Activated CD8-positive, alpha-beta T cell treated with anti-CD3 and anti-CD28 coated beads for 36 hours (primary cell): ENCODE measurements at regions of chr2 and their contacts with region 1.

Region 1: DNA sequence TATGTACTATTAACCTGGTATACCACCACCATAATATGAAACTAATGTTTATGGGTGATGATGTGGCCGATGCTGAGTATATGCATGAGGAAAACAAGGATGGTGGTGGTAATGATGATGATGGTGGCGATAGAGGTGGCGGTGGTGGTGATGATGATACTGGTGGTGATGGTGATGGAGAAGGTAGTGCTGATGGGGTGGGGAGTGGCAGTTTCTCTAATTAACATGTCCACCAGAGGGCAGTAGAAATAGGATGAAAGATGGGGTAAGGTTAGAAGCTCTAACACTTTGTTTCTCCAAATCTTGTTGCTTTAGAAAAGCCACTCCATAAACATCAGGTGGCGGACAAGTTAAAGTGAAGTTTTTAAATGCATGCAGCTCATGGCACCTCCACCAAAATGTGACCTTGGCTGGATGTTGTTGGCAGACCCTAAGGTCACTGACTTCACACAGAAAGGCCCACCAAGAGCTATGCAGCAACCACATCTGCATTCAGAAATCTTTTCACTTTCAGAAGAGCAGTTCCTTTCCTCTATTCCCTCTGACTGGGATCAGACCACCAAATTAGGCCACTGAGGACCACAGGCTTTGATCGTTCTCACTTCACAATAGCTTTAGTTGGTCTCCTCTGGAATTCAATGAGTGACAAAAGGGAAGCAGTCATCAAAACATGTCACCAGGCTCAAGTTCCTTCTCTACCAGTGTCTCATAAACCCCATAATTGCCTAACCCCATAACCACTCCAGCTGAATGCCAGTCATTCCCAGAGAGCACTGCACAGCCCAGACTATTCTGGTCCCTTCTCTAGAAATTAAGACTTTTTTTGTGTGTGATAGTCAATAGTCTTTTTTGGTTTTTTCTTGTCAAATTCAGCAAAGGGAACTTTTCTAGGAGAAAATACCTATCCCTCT is 7.5 kb upstream of the BCL11A start:
- DNase-seq: peak; percentile 20
- ATAC-seq: peak; percentile 60
- H3K4me3 Mint-ChIP-seq: no peak overlapping the region
- H3K27ac Mint-ChIP-seq: no peak overlapping the region
- H3K4me1 Mint-ChIP-seq: peaks cover 12% of the 10 kb centered on the region
- H3K27me3 Mint-ChIP-seq: peaks cover 48% of the 10 kb centered on the region
- CTCF ChIP-seq: no peak

Region 2: GRCh38 chr2:60484133-60484645 is 76.8 kb before region 1 on chr2:
- CTCF ChIA-PET with region 1: no interaction called
- POLR2A ChIA-PET with region 1: no interaction called
- intact Hi-C with region 1: no loop called
- DNase-seq: no peak
- ATAC-seq: no peak
- H3K4me3 Mint-ChIP-seq: no peak overlapping the region
- H3K27ac Mint-ChIP-seq: no peak overlapping the region
- H3K4me1 Mint-ChIP-seq: no peaks in the 10 kb centered on the region
- H3K27me3 Mint-ChIP-seq: peaks cover 5% of the 10 kb centered on the region
- CTCF ChIP-seq: no peak

Region 3: GRCh38 chr2:60544954-60545560 is 15.9 kb before region 1 on chr2:
- CTCF ChIA-PET with region 1: interaction called, 12 read pairs
- POLR2A ChIA-PET with region 1: interaction called, 6 read pairs
- intact Hi-C with region 1: no loop called
- DNase-seq: no peak
- ATAC-seq: no peak
- H3K4me3 Mint-ChIP-seq: no peak overlapping the region
- H3K27ac Mint-ChIP-seq: no peak overlapping the region
- H3K4me1 Mint-ChIP-seq: peaks cover 7% of the 10 kb centered on the region
- H3K27me3 Mint-ChIP-seq: peaks cover 49% of the 10 kb centered on the region
- CTCF ChIP-seq: no peak

Region 4: DNA sequence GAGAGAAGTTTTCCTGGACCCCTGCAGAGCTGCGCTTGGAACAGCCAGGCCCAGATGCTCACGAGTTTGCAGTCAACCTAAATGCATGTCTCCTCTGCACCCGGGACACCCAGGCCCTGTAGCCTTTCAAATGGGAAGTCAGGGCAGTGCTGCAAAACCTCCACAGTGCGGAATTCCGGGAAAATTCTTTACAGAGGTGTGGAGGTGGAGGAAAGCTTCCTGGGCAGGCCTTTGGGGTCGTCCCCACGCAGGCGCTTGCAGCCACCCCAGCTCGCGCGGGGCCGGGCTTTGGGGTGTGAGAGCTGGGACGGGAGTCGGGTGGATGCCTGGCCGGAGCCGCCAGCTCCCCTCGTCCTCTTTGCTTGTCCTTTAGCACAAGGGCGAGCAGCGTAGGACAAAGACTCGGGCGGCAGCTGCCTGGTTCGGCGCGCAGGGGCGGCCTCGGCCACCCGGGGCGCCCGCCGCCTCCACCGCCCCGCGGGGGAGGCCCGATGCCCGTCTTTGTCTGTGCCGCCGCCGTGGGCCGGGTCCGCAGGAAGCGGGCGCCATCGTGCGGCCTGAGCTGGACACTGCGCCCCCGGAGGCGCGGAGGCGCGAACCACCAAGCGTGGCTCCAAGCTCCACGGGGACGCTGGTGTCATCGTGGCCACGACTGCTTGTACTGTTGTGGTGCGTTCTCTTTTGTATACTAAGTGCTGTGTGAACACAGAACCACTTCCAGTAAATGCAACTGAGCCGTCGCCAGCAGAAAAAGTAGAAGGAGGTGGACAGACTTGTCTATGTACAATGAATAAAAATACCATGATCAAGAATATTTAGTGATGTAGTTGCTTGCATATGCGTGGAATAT is 20.7 kb after region 1 on chr2:
- CTCF ChIA-PET with region 1: interaction called, 104 read pairs
- POLR2A ChIA-PET with region 1: no interaction called
- intact Hi-C with region 1: no loop called
- DNase-seq: peak; percentile 75
- ATAC-seq: peak; percentile 99
- H3K4me3 Mint-ChIP-seq: no peak overlapping the region
- H3K27ac Mint-ChIP-seq: no peak overlapping the region
- H3K4me1 Mint-ChIP-seq: peaks cover 2% of the 10 kb centered on the region
- H3K27me3 Mint-ChIP-seq: peaks cover 29% of the 10 kb centered on the region
- CTCF ChIP-seq: peak; percentile 98